Activated T-helper 2 cell treated with anti-CD3 and anti-CD28 coated beads, Interferon-gamma antibody, Interleukin-2, Interleukin-4, amounts not matched to agents 10 μg/mL and 5 μg/mL and 100 μg/mL, durations not matched to agents 14 hours and 24 hours and 36 hours (primary cell): ENCODE measurements at regions of chr6 and their contacts with region 1.

Region 1: DNA sequence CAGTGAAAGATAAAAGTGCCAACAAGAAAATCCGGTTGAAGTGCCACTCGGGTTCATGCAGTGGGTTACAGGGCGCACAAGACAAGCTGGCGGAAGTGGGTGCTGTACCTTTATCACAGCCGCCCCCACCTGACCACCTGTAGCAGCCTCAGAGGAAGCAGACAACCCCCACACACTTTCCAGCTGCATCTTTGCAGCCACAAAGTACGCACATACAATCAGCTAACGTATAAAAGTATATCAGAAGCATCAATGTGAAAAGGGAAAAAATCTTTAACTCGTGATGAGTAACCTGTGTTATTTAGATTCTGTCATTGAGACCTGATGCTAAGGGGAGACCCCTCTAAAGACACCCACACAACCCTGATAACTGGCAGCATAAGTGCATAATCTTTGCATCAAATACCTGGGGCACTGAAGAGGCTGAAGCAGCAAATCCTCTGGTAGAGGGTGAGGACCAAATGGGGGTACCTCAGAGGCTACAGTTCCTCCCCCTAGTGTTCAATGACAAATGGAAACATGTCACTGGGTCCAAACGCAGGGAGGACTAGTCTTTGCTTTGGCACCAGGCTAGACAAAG is 22.1 kb downstream of the BACH2 start:
- DNase-seq: peak; percentile 78
- H3K4me3 Mint-ChIP-seq: peak overlapping the region; percentile 72
- H3K27ac Mint-ChIP-seq: peak overlapping the region; percentile 97
- H3K4me1 Mint-ChIP-seq: peaks cover 84% of the 10 kb centered on the region
- H3K27me3 Mint-ChIP-seq: no peaks in the 10 kb centered on the region

Region 2: DNA sequence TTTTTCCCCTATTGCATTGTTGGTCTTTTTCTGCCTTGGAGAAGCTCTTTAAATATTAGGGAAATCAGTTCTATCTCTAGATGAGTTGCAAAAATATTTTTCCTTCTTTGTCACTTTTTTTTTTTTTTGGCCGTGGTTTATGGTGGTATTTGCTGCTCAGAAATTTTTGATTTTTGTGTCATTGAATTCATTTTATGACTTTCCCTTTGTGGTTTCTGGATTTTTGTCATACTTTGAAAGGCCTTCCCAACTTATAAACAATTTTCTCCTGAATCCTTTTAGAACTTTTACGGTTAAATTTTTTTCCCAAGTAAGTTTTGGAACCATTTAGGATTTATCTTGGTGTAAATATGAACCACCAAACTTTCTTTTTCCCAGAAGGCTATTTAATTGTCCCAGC is 234.6 kb before region 1 on chr6:
- intact Hi-C with region 1: no loop called
- DNase-seq: no peak
- H3K4me3 Mint-ChIP-seq: no peak overlapping the region
- H3K27ac Mint-ChIP-seq: no peak overlapping the region
- H3K4me1 Mint-ChIP-seq: peaks cover 22% of the 10 kb centered on the region
- H3K27me3 Mint-ChIP-seq: no peaks in the 10 kb centered on the region

Region 3: GRCh38 chr6:90144396-90144795 is 130.1 kb before region 1 on chr6:
- intact Hi-C with region 1: loop called (anchors 2 kb)
- DNase-seq: no peak
- H3K4me3 Mint-ChIP-seq: peak overlapping the region; percentile 54
- H3K27ac Mint-ChIP-seq: peak overlapping the region; percentile 92
- H3K4me1 Mint-ChIP-seq: peaks cover 68% of the 10 kb centered on the region
- H3K27me3 Mint-ChIP-seq: no peaks in the 10 kb centered on the region

Region 4: DNA sequence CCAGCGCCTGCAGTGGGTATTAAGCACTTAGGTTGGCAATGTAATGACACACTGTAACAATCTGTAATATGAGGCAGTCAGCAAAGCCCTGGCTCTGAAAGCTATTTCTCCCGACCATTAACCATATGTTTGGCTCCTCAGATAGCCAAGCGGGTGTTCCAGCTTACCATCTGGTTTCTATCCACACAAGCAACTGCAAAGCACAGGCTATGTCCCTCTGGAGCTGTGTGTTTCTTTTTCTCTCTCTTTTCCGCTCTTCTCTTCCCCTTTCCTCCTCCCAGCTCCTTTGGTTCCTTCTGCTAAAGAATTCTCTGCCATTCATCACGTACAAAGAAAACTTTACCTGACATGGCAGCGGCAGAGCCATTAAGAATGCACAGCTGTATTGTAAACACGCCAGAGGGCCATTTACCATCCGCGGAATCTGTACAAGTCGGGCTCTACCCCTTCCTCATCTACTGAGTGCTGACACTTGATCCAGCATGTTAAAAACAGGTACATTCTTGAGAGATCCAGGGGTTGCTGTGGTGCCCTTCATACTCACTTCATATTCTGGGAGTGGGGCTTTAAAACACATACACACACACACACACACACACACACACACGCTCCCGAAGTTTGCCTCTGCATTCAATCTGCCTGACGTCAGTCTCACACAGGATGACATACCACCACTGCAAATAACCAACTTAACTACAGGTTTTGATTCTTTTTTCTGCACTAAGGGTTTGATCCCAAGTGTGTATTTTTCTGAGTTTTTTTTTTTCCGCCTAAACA is 55.1 kb before region 1 on chr6:
- intact Hi-C with region 1: loop called (anchors 1 kb)
- DNase-seq: no peak
- H3K4me3 Mint-ChIP-seq: no peak overlapping the region
- H3K27ac Mint-ChIP-seq: no peak overlapping the region
- H3K4me1 Mint-ChIP-seq: peaks cover 25% of the 10 kb centered on the region
- H3K27me3 Mint-ChIP-seq: no peaks in the 10 kb centered on the region

Region 5: GRCh38 chr6:90251295-90251992 is 23.1 kb before region 1 on chr6:
- intact Hi-C with region 1: loop called (anchors 1 kb)
- DNase-seq: no peak
- H3K4me3 Mint-ChIP-seq: peak overlapping the region; percentile 48
- H3K27ac Mint-ChIP-seq: peak overlapping the region; percentile 83
- H3K4me1 Mint-ChIP-seq: peaks cover 71% of the 10 kb centered on the region
- H3K27me3 Mint-ChIP-seq: no peaks in the 10 kb centered on the region

Region 6: DNA sequence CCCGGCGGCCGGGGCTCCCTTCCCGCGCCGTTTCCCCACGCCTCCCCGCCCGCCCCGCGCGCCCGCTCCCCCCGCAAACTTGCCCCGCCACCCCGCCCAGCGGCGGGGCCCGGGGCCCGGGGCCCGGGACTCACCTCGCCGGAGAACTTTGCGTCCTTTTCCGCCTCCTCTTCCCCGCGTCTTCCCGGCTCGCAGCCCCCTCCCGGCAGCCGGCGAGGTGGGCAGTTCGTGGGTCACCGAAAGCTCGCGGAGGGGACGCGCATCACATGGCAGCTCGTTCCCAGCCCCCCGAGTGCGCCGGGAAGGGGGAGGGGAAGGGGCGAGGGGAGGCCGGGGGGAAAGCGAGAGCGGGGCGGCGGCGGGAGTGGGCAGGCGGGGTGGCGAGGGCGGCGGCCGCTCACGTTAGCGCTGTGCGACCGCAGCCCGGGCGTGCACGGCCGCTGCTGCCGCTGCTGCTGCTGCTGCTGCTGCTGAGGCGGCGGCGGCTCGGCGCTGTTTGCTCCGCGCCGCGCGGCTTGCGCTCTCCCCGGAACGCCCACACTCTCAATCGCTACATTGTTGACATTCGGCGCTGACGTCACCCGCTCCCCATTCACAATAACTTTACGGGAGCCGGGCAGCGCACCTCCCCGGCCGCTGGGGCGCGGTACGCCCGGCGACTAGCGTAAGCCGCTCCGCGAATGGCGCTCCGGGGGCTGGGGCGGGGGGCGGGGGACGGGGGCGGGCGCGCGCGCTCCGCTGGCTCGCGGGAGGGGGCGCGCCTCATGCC is 22.0 kb after region 1 on chr6 and contains the start of gene BACH2:
- intact Hi-C with region 1: no loop called
- DNase-seq: peak; percentile 91
- H3K4me3 Mint-ChIP-seq: peak within 1 kb of the TSS; percentile 91
- H3K27ac Mint-ChIP-seq: peak within 1 kb of the TSS; percentile 86
- H3K4me1 Mint-ChIP-seq: peaks cover 50% of the 10 kb centered on the region
- H3K27me3 Mint-ChIP-seq: peaks cover 13% of the 10 kb centered on the region
- total RNA-seq, gene BACH2: 88.8 and 89.7 TPM in 2 replicates

Region 7: DNA sequence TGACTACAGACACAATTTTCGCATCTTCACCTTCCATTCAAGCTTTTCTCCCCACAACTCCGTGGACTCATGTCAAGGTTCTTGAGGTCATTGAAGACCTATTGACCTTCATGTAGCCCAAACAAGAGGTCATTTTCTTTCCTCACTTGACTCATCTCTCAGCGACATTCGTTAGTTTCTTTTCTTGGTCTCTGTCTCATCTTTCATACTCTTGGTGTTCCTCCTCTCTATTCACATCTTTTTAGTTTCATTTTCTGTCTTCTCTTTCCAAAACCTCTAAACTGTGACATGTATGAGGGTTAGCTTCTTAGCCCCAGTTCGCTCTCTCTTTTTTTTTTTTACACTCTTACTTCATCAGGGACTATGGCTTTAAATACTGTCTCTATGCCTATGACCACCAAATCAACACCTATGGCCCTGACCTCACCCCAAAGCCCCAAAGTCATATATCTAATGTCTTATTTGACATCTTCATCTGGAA is 150.7 kb after region 1 on chr6:
- intact Hi-C with region 1: loop called (anchors 1 kb)
- DNase-seq: no peak
- H3K4me3 Mint-ChIP-seq: peak overlapping the region; percentile 52
- H3K27ac Mint-ChIP-seq: peak overlapping the region; percentile 95
- H3K4me1 Mint-ChIP-seq: peaks cover 28% of the 10 kb centered on the region
- H3K27me3 Mint-ChIP-seq: no peaks in the 10 kb centered on the region